ENCODE measurements at regions of chr10 and their contacts with region 1.

Region 1: DNA sequence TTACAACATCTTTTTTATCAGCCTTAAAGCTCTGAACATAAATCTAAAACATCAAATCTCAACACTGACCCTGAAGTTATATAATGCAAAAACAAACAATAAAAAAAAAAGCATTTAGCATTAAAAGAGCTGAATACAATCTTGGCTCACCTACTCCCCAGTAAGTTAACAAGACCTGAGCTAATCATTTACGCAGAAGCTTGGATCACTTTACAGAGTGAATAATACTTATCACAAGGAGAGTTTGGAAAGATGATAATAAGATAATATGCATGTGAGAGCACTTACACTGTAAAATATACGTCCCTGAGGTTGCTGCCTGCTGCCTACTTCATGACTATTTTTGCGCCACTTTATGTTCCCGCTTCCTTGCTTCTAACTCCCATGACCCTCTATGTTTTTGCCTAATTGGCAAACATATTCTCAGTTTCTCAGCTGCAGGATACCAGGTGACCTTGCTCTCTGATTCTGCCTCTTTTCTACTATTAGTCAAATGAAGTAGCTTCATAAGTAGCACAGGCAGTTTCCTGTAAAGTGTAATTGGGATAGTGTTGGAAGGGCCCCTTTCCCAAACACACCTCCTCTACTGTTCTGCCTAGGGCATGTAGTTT is 333.6 kb downstream of the LRRTM3 start:
- DNase-seq: no peak
- H3K27ac ChIP-seq: no peak overlapping the region
- CTCF ChIP-seq: no peak

Region 2: DNA sequence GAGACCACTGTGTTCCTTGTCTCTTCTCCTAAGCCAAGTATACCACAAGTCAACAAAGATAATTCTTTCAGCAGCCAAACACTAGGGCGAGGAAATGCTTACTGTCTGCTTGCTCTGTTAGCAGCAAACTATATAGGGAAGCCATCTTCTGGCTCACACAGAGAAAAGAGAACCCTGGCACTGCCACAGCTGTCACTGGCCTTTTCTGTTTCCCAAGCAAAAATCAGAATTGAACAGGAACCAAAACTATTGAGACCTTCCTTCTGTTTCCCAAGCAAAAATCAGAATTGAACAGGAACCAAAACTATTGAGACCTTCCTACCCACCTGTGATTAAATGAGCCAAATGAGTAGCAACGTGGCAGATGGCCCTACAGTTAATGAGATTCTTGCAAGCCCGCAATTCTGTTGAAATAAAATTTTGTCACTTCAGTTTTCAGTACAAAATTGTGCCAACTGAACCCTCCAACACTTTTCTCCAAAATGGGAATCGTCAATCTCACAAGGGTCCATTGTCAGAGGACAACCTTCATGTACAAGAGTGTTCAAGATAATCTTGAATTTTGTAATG is 279.1 kb before region 1 on chr10:
- CTCF ChIA-PET with region 1: interaction called, 10 read pairs
- POLR2A ChIA-PET with region 1: no interaction called
- DNase-seq: no peak
- H3K27ac ChIP-seq: no peak overlapping the region
- CTCF ChIP-seq: no peak

Region 3: DNA sequence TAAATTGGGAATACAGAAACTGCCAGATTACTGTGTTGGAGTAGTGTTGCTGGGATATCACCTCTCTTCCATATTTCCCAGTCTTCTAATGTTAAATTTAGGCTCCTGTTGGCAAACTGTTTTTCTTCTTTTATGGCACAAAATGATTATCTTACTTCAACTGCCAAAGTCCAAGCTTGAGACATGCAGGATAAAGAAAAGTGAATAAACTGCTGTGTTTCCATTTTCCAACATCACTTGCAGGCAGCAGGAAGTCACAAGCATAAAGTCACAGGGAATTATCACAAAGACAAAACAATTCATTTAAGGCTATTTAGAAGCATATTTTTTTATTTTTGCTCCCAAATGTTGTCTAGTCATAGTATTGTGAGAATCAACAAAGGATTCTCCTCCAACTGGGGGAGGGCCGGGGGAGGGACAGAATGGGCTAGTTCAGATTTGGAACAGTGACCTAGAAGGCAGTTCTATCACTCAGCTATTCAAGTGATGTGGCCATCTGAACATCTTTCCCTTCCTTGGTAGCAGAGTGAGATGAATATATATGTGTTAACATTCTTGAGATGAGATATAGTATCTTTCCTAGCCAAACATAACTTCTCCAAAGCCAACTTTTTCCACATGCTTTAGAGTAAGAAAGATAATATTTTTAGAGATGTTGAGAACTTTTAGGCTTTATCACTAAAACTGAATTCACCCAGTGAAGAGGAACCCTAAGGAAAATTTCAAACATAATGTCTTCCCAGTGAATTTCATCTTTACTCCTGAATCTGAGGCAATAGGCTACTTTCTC is 71.9 kb after region 1 on chr10:
- CTCF ChIA-PET with region 1: no interaction called
- POLR2A ChIA-PET with region 1: no interaction called
- DNase-seq: no peak
- H3K27ac ChIP-seq: no peak overlapping the region
- CTCF ChIP-seq: no peak

Measured in RWPE1 (cell line).